Testis (tissue), 5 donors: ENCODE measurements at regions of chr17 and their contacts with region 1.

Region 1: DNA sequence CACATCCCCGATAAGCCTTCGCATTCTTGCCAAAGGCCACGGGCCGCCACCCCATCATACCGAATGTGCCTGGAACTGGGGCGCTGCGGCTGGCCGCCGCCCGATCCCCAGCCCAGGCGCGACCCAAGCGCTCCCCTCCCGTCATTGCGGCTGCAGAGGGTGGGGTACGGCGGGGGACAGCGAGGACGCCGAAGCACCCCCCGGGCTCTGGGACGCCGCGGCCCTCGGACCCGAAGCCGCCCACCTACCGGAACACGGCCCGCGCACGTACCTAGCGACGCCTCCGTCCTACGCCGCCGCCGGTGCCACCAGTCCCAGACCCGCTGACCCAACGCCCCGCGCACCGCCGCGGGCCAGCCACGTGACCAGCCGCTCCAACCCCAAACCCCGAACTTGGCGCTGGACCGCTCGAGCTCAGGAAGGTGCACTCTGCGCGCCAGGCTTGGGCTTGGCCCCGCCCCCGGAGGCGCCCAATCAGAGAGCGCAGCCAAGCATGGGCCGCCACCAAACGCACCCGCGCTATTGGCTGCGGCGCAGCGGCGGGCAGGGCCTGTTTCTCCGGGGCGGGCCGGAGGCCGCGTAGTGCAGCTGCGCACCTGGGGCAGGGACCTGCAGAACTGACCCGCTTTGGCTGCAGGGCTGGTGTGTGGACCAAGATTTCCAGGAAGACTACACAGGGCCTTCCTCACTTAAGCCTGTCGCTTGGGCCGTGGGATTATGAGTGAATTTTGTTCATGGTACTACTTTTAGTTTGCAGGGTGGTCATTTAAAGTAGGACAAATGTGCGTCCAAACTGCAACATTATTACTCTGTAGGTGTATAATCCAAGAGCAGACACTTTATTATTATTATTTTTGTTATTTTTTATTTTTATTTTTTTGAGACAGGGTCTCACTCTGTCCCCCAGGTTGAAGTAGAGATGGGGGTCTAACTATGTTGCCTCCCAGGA is at the start of gene SHMT1:
- DNase-seq: peak; percentile 97
- H3K4me3 ChIP-seq: peak within 1 kb of the TSS; percentile 54 to 93
- H3K27ac ChIP-seq: peak within 1 kb of the TSS; percentile 46 to 77
- H3K4me1 ChIP-seq: peaks cover 7% of the 10 kb centered on the region
- H3K27me3 ChIP-seq: no peaks in the 10 kb centered on the region
- CTCF ChIP-seq: no peak
- POLR2A ChIP-seq: no peak
- total RNA-seq, gene SHMT1: 36.4 to 48.1 TPM

Region 2: GRCh38 chr17:18280766-18281371 is 82.5 kb before region 1 on chr17:
- intact Hi-C with region 1: loop called (anchors 10 kb)
- DNase-seq: no peak
- H3K4me3 ChIP-seq: no peak overlapping the region
- H3K27ac ChIP-seq: no peak overlapping the region
- H3K4me1 ChIP-seq: no peaks in the 10 kb centered on the region
- H3K27me3 ChIP-seq: no peaks in the 10 kb centered on the region
- CTCF ChIP-seq: no peak
- POLR2A ChIP-seq: no peak